Activated CD8-positive, alpha-beta T cell treated with anti-CD3 and anti-CD28 coated beads for 36 hours (primary cell): ENCODE measurements at regions of chr3 and their contacts with region 1.

Region 1: DNA sequence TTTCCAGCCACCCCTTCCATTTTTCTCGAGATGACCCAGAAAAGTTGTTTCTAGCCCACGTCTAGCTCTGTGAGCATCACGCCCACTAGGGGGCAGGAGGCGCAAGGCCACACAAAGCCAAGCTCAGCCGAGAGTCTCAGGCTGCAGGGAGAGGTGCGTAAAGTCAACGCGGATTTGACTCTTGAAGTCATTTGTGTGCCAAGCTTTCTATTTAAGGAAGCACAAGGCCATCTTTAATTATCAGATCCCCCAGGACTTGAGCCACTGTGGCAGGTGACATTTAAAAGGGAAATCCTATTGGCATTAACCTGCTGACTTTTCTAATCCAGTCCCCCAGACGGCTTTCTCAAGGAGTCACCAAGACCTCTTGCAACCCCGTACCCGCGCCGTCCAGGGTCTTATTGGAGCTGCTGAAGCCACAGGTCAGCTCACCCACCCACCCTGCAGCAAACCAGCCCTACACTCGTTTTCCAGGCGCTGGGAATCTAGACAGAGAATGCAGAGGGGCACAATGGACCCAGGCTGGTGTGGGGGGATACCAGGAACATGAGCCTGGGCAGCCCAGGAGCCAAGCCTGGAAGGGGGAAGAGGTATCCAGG is 62.1 kb downstream of the CAPN7 start:
- DNase-seq: peak; percentile 93
- ATAC-seq: peak; percentile 63
- H3K4me3 Mint-ChIP-seq: no peak overlapping the region
- H3K27ac Mint-ChIP-seq: no peak overlapping the region
- H3K4me1 Mint-ChIP-seq: peaks cover 44% of the 10 kb centered on the region
- H3K27me3 Mint-ChIP-seq: peaks cover 7% of the 10 kb centered on the region
- CTCF ChIP-seq: peak; percentile 83

Region 2: DNA sequence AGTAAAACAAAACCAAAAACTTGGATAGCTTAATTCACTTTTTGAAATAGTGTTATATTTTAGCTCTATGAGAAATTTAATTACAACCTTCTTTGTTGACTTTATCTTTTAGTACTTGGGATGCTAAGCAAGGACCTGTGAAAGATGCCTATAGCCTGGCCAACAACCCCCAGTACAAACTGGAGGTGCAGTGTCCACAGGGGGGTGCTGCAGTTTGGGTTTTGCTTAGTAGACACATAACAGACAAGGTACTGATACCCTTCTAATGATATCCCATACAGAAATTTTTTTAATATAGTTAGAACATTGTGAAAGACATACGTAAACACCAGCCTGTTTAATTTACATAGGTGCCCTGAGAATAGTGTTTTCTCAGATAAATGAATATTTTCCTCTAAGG is 26.8 kb before region 1 on chr3:
- CTCF ChIA-PET with region 1: interaction called, 21 read pairs
- POLR2A ChIA-PET with region 1: no interaction called
- intact Hi-C with region 1: no loop called
- DNase-seq: peak; percentile 62
- ATAC-seq: peak; percentile 58
- H3K4me3 Mint-ChIP-seq: no peak overlapping the region
- H3K27ac Mint-ChIP-seq: no peak overlapping the region
- H3K4me1 Mint-ChIP-seq: peaks cover 6% of the 10 kb centered on the region
- H3K27me3 Mint-ChIP-seq: no peaks in the 10 kb centered on the region
- CTCF ChIP-seq: peak; percentile 38

Region 3: DNA sequence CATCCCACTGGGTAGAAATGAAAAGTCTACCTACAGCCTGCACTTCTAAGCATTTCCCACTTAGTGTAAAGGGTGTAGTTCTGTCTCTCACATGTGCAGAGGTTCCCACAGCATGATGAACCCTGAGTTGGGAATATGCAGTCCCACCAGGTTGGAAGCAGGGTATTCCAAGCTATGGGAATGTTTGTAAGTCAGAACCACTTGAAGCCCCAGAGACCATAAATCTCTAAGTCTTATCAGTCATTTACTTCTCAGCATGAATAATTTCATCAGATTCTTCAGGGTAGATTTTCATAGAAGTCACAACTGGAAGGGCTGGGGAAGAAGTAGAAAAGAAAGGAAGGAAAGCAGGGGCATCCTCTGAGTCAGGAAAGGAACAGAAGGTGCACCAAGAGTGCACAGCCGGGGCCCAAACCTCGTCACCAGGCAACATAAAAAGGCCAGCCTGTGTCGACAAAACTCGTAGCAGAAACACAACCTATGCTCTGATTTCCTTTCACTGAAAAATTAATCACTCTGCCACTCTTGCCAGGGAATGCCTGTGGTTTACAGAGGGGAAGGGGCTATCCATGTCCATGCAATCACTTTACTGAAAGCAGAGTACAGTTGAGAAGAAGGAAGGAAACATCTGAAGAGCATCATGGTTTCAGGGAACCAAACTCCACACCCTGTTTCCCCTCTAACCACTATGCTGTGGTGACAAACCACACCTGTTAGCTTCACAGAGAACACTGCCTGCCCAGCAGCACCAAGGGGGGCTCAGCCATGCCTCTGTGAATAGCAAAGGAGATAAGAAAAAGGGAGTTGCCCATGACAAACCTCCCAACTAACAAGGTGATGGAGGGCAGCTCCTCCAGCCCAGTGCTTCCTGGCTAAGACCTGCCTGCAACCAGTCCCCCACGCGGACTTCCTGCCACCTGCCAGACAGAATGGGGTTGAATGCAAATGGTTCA is 23.7 kb after region 1 on chr3:
- CTCF ChIA-PET with region 1: interaction called, 12 read pairs
- POLR2A ChIA-PET with region 1: interaction called, 3 read pairs
- intact Hi-C with region 1: no loop called
- DNase-seq: peak; percentile 85
- ATAC-seq: peak; percentile 89
- H3K4me3 Mint-ChIP-seq: peak overlapping the region; percentile 31
- H3K27ac Mint-ChIP-seq: peak overlapping the region; percentile 70
- H3K4me1 Mint-ChIP-seq: peaks cover 38% of the 10 kb centered on the region
- H3K27me3 Mint-ChIP-seq: no peaks in the 10 kb centered on the region
- CTCF ChIP-seq: no peak

Region 4: GRCh38 chr3:15325242-15325641 is 57.1 kb after region 1 on chr3:
- CTCF ChIA-PET with region 1: interaction called, 122 read pairs
- POLR2A ChIA-PET with region 1: interaction called, 4 read pairs
- intact Hi-C with region 1: loop called (anchors 5 kb)
- DNase-seq: no peak
- ATAC-seq: no peak
- H3K4me3 Mint-ChIP-seq: no peak overlapping the region
- H3K27ac Mint-ChIP-seq: no peak overlapping the region
- H3K4me1 Mint-ChIP-seq: peaks cover 30% of the 10 kb centered on the region
- H3K27me3 Mint-ChIP-seq: peaks cover 2% of the 10 kb centered on the region
- CTCF ChIP-seq: no peak

Region 5: DNA sequence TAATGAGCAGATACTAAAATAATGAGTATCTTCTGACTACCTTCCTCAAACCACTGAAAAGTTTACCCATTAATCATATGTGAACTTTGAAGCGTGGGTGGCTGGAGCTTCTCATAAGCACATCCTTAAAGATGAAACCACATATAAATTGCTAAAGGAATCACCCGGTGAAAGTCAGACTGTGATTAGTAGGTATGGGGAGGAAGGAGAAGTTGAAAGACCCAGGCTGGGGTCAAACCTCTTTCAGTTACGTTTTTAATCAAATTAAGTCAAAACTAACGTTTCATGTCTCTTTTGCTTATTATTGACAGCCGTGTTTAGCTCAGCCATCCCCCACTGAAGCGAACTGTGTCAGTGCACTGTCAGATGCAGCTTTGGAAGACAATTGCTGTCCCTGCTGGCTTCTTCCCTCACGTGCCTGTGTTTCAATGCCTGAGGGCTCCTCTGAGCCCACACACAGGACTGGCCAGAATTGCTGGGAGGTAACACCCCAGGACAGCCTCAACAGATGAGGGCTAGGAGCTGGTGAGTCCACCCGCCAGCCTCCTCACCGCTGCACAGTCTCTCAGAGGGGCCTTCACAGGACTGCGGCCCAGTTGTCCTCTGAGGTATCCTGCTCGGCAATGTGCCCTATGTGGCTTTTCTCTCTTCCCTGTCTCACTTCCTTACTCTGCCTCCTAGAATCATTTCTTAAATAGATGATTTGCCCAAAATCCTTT is 93.5 kb after region 1 on chr3:
- CTCF ChIA-PET with region 1: interaction called, 14 read pairs
- POLR2A ChIA-PET with region 1: interaction called, 5 read pairs
- intact Hi-C with region 1: loop called (anchors 5 kb)
- DNase-seq: peak; percentile 81
- ATAC-seq: peak; percentile 85
- H3K4me3 Mint-ChIP-seq: no peak overlapping the region
- H3K27ac Mint-ChIP-seq: no peak overlapping the region
- H3K4me1 Mint-ChIP-seq: peaks cover 32% of the 10 kb centered on the region
- H3K27me3 Mint-ChIP-seq: peaks cover 6% of the 10 kb centered on the region
- CTCF ChIP-seq: no peak

Region 6: GRCh38 chr3:15384510-15385237 is 116.5 kb after region 1 on chr3:
- CTCF ChIA-PET with region 1: interaction called, 128 read pairs
- POLR2A ChIA-PET with region 1: interaction called, 3 read pairs
- intact Hi-C with region 1: no loop called
- DNase-seq: no peak
- ATAC-seq: no peak
- H3K4me3 Mint-ChIP-seq: no peak overlapping the region
- H3K27ac Mint-ChIP-seq: no peak overlapping the region
- H3K4me1 Mint-ChIP-seq: peaks cover 3% of the 10 kb centered on the region
- H3K27me3 Mint-ChIP-seq: no peaks in the 10 kb centered on the region
- CTCF ChIP-seq: no peak

Region 7: DNA sequence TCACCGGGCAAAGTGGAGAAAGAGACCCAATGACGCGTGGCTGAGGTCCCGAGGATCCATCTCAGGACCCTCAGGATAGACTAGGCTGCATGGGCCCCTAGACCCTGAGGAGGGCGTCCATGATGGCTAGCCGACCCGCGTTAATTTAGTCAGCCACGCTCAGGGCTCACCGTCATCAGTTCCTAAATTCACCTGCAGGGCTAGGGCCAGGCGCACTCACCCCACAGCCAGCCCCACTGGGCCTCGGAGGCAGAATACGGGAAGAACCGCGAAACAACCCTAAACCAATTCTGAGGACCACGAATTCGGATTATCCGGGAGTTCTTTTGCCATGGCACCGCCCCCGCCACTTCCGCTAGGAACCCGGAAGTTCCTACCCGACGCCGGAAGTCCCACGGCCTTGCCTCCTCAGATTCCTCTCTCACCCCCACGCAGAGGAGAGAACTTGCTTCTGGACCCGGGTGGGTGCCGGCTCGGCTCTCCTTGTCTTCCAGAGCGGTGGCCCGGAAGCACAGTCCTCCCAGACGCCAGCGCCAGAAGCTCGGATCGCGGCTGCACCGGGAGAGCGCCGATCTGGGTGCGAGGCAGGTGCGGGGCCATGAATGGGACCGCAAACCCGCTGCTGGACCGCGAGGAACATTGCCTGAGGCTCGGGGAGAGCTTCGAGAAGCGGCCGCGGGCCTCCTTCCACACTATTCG is 159.2 kb after region 1 on chr3 and contains the starts of genes EAF1 and METTL6:
- CTCF ChIA-PET with region 1: interaction called, 13 read pairs
- POLR2A ChIA-PET with region 1: interaction called, 4 read pairs
- intact Hi-C with region 1: no loop called
- DNase-seq: peak; percentile 91
- ATAC-seq: peak; percentile 85
- H3K4me3 Mint-ChIP-seq: peak within 1 kb of the TSS; percentile 87
- H3K27ac Mint-ChIP-seq: peak within 1 kb of the TSS; percentile 99
- H3K4me1 Mint-ChIP-seq: peaks cover 43% of the 10 kb centered on the region
- H3K27me3 Mint-ChIP-seq: no peaks in the 10 kb centered on the region
- CTCF ChIP-seq: peak; percentile 45
- total RNA-seq, gene EAF1: 19.7 to 21.8 TPM
- total RNA-seq, gene METTL6: 17.5 to 19.2 TPM